ENCODE measurements at regions of chr3 and their contacts with region 1.

Region 1: GRCh38 chr3:69013253-69014021 is at the start of gene EOGT:
- DNase-seq: peak; percentile 91 to 94 (median 92)
- H3K4me3 ChIP-seq: peak within 1 kb of the TSS; percentile 85
- H3K27ac ChIP-seq: peak within 1 kb of the TSS; percentile 96 to 100
- H3K4me1 ChIP-seq: peaks cover 4% of the 10 kb centered on the region
- H3K27me3 ChIP-seq: no peaks in the 10 kb centered on the region
- CTCF ChIP-seq: peak; percentile 59 to 69 (median 63)
- EP300 ChIP-seq: no peak
- POLR2A ChIP-seq: peak; percentile 60
- total RNA-seq, gene EOGT: 12.1 to 40.7 (median 20.9) TPM

Region 2: GRCh38 chr3:68676136-68676535 is 337.3 kb before region 1 on chr3:
- intact Hi-C with region 1: no loop called
- DNase-seq: no peak
- H3K4me3 ChIP-seq: no peak overlapping the region
- H3K27ac ChIP-seq: no peak overlapping the region
- H3K4me1 ChIP-seq: no peaks in the 10 kb centered on the region
- H3K27me3 ChIP-seq: no peaks in the 10 kb centered on the region
- CTCF ChIP-seq: no peak
- EP300 ChIP-seq: no peak
- POLR2A ChIP-seq: no peak

Region 3: GRCh38 chr3:69044608-69045007 is 31.2 kb after region 1 on chr3:
- intact Hi-C with region 1: loop called in 1 of 4 experiments (anchors 2 kb)
- DNase-seq: no peak
- H3K4me3 ChIP-seq: no peak overlapping the region
- H3K27ac ChIP-seq: no peak overlapping the region
- H3K4me1 ChIP-seq: peaks cover 1% of the 10 kb centered on the region
- H3K27me3 ChIP-seq: no peaks in the 10 kb centered on the region
- CTCF ChIP-seq: no peak
- EP300 ChIP-seq: no peak
- POLR2A ChIP-seq: no peak

Region 4: DNA sequence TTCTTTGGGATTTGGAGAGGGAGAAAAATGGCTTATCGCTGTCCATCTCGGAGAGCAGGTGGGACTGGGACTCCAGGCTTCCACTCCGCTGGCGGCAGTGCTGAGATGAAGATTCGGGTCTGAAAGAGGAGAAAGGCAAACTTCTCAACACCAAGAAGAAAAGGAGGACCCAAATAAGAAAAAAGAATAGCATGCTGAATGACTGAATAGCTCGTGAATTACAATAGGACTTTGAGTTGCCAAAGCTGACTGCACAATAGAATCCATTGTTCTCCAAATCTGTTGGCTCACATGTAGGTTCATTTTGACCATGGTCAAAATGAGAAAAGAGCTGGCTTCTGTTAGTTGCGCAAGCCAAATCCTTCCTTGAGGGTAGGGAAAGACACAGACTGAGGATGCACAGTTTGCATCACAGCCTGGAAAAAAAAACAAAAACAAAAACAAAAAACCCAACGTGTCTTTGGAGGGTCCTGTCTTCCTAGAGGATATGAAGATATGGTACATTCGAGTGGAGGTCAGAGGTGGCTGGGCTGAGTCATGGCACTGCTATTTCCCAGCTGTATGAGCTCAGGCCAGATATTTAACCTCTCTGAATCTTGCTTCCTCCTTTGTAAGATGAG is 168.3 kb after region 1 on chr3:
- intact Hi-C with region 1: no loop called
- DNase-seq: no peak
- H3K4me3 ChIP-seq: no peak overlapping the region
- H3K27ac ChIP-seq: no peak overlapping the region
- H3K4me1 ChIP-seq: no peaks in the 10 kb centered on the region
- H3K27me3 ChIP-seq: no peaks in the 10 kb centered on the region
- CTCF ChIP-seq: no peak
- EP300 ChIP-seq: no peak
- POLR2A ChIP-seq: no peak

Measured in ovary (tissue), 10 donors.